ENCODE measurements at regions of chr19 and their contacts with region 1.

Region 1: DNA sequence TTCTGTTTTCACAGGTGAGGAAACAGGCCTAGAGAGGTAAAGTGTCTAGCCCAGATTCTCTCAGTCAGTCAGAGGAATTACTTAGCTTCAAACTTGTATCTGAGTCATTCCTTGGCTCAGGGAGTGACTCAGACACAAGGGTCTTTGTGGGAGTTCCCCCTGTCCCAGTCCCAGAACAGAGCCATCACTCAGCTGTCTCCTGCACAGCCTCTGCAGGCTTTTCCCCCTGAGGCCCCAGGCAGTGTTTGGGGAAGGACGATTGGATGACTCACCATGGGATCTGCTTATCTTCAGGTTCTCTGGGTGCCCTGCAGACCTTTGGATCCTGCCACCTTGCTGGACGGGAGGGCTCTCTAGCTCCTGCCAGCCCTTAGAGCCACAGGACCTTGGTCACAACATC is 13.2 kb downstream of the ZNF793 start:
- DNase-seq: no peak
- ATAC-seq: no peak

Region 2: DNA sequence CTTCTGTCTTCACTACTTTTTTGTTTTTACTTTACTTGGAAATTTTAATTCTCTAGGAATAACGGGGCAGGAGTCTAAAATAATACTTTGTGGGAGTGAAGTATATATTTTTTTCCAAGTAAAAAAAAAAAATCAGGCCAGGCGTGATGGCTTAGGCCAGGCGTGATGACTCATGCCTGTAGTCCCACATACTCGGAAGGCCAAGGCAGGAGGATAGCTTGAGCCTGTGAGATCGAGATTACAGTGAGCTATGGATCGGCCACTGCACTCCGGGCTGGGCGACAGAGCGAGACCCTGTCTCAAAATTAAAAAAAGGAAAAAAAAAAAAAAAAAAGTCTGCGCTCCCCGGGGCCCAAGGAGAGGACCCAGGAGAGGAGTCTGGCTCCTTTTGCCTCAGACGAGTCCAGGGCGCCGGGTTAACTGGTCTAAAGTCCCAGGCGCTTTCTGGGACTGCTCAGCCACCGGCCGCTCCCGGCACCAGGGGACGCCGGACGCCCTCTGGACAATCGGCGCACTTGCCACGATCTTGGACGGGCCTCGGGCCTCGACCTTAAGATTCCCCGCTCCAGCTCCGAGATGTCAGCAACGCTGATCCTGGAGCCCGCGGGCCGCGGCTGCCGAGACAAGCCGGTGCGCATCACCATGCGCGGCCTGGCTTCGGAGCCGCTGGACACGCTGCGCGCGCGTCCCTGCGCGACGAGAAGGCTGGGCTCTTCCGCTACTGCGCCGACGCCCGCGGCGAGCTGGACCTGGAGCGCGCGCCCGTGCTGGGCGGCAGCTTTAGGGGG is 1098.7 kb before region 1 on chr19:
- intact Hi-C with region 1: loop called (anchors 5 kb)
- DNase-seq: no peak
- ATAC-seq: no peak

Region 3: DNA sequence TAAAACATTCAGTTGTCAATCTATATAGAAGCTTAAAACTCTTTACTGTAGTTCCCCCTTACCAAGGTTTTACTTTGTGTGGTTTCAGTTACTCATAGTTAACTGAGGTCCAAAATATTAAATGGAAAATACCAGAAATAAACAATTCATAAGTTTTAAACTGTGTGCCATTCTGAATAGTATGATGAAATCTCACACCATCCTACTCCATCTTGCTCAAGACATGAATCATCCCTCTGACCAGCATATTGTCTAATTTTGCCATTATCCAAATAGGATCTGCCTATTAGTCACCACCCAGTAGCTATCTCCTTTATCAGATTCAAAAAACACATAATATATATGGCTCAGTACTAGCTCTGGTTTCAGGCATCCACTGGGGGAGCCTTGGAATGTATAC is 52.3 kb after region 1 on chr19:
- intact Hi-C with region 1: no loop called
- DNase-seq: no peak
- ATAC-seq: no peak